ENCODE measurements at regions of chr4 and their contacts with region 1.

Region 1: DNA sequence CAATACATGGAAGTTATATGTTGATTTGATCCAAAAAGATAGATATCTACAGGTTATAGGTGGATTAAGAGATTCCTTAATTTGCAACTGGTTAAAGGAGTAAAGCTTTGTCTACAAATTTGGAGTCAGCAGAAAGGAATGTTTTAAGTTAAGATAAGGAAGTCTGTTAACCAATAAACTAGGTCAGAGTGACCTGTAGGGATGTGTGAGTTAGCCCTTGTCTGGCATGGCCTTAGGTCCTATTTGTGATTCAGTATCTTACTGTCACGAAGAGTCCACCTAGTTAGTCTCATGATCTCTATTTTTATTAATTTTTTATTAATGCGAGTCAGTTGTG is 230.8 kb downstream of the INPP4B start:
- DNase-seq: no peak

Region 2: GRCh38 chr4:141062651-141063050 is 1552.6 kb before region 1 on chr4:
- intact Hi-C with region 1: loop called in 1 of 2 experiments (anchors 5 kb)
- DNase-seq: no peak